Motor neuron (in vitro differentiated cells): ENCODE measurements at regions of chrX and their contacts with region 1.

Region 1: DNA sequence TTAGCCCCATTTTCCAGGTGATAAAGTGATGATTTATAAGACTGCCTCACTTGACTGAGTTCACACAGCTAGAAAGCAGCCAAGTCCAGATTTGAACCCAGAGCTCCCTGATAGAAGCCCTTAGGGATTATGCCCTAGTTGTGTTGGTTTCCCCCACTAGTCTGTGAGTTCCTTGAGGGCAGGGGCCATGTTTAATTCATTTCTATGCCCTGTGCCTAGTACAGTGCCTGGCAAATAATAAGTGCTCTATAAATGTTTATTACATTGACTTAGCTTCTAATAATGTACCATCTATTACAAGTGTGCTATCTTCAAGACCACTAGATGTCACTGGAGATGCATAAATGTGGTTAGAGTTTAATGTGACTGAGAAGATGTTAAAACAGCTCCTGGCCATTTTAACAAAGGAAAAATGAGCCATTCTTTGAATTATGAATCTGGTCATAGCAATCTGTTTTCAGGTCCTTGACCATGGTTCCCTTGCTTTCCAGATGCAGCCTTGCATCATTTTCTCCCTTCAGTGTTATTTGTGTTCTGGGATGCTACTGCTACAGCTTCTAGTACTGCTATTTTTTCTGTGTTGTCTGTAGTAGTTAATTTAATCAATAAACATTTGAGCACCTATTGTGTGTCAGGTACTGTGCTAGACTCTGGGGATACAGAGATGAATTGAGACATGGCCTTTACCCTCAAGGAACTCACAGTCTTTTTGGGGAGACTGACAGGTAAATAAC is 43.2 kb downstream of the SLC9A6 start:
- ATAC-seq: peak in 6 of 8 experiments; percentile 46 to 66 (median 59)
- H3K4me3 ChIP-seq: no peak overlapping the region
- H3K27ac ChIP-seq: no peak overlapping the region
- H3K4me1 ChIP-seq: peaks cover 0 to 9% of the 10 kb centered on the region in 2 donors

Region 2: GRCh38 chrX:135639066-135639780 is 389.2 kb before region 1 on chrX:
- in situ Hi-C with region 1: no loop called
- ATAC-seq: no peak
- H3K4me3 ChIP-seq: no peak overlapping the region
- H3K27ac ChIP-seq: no peak overlapping the region
- H3K4me1 ChIP-seq: no peaks in the 10 kb centered on the region

Region 3: DNA sequence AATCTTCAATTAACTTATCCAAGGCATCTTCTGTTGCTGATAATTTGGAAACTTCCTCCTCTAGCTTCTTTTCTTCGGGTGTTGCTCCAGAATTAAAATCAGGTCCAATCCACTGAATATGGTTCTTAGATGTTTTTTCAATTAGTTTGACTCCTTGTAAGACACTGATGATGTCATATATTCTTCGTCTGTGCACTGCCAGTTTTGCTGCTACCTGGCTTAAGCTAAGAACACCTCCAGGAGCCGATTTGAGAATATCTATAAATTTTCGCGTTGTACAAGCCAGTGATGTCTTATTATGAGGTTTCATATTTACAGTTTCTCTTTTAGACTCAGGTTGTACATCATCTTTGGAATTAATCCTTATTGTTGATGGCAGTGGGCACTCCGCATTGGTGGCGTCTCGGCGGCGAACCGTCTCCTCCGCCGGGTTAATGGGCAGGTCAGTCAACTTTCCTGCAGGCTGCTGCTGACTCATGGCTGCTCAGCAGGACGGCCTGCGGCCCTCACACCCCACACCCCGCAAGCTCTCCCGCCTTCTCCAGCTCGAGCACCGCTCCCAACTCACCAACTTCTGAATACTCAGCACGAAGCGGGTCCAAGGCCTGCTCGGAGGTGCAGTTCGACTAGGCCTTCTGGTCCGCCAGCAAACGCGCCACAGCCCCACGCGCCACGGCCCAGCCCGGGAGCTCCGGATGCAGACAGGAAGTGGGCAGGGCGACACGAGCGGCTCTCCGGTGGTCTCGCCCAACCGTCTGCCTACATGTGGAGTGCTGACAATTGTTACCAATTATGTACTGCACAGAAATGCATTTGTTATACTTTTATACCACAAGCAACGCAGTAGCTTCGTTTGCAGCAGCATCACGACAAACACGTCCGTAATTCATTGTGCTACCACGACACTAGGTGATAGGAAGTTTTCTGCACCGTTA is 69.7 kb after region 1 on chrX:
- in situ Hi-C with region 1: no loop called
- ATAC-seq: no peak
- H3K4me3 ChIP-seq: no peak overlapping the region
- H3K27ac ChIP-seq: no peak overlapping the region
- H3K4me1 ChIP-seq: no peaks in the 10 kb centered on the region

Region 4: DNA sequence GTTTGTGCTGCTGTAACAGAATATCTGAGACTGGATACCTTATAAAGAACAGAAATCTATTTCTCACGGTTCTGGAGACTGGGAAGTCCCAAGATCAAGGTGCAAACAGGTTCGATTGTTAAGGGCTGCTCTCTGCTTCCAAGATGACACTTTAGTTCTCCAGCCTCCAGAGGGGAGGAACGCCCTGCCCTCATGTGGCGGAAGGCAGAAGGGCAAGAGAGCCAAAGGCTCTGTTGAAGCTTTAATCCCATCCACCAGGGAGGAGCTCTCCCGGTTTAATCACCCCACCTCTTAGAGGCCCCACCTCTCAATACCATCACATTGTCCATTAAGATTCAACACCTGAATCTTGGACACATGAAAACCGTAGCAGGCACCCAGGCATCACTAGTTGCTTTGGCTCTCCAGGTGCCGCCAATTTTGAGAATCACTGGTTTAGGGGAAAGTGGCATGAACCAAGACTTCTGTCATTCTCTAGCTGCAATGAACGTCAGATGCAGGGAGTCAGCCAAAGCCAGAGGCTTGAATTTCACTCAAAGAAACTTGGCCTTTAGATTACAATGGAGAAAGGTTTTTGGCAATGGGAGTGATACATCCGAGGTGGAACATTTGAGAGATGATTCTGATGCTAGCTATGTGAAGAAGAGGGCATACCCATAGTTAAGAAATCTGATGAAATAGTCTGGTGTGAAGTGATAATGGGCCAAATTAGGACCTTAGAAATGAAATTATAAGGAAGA is 134.6 kb after region 1 on chrX:
- in situ Hi-C with region 1: loop called in 2 of 9 experiments (anchors 25 kb)
- ATAC-seq: peak in 3 of 8 experiments; percentile 87 to 91 (median 87)
- H3K4me3 ChIP-seq: no peak overlapping the region
- H3K27ac ChIP-seq: no peak overlapping the region
- H3K4me1 ChIP-seq: peaks cover 4 to 13% of the 10 kb centered on the region in 2 donors

Region 5: GRCh38 chrX:136209016-136209738 is 180.8 kb after region 1 on chrX:
- in situ Hi-C with region 1: loop called in 1 of 9 experiments (anchors 25 kb)
- ATAC-seq: peak in 4 of 8 experiments; percentile 22 to 77 (median 62)
- H3K4me3 ChIP-seq: no peak overlapping the region
- H3K27ac ChIP-seq: no peak overlapping the region
- H3K4me1 ChIP-seq: no peaks in the 10 kb centered on the region

Region 6: DNA sequence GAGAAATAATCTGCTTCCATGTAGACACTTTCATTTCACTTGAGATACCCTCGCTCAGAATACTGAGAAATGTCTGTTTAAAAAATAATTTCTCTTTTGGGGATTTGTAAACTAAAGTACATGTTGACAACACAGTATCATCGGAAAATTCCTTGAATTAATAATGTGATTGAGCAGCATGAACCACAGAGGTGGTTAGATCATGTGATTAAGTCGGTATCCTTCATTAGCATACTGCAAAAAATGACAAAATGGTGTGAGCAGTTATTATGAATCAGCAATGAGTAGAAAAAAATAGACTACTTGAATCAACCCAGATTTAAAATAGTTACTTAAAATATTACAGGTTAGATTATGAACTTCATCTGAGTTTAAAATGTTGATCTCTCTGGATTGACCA is 208.7 kb after region 1 on chrX:
- in situ Hi-C with region 1: no loop called
- ATAC-seq: no peak
- H3K4me3 ChIP-seq: no peak overlapping the region
- H3K27ac ChIP-seq: no peak overlapping the region
- H3K4me1 ChIP-seq: no peaks in the 10 kb centered on the region